ENCODE measurements at regions of chr12 and their contacts with region 1.

Region 1: GRCh38 chr12:49232940-49233841 is 31.7 kb upstream of the TUBA1C start:
- DNase-seq: no peak
- H3K4me3 Mint-ChIP-seq: peak overlapping the region; percentile 16
- H3K27ac Mint-ChIP-seq: peak overlapping the region; percentile 45
- H3K4me1 Mint-ChIP-seq: peaks cover 25% of the 10 kb centered on the region
- H3K27me3 Mint-ChIP-seq: peaks cover 3% of the 10 kb centered on the region

Region 2: DNA sequence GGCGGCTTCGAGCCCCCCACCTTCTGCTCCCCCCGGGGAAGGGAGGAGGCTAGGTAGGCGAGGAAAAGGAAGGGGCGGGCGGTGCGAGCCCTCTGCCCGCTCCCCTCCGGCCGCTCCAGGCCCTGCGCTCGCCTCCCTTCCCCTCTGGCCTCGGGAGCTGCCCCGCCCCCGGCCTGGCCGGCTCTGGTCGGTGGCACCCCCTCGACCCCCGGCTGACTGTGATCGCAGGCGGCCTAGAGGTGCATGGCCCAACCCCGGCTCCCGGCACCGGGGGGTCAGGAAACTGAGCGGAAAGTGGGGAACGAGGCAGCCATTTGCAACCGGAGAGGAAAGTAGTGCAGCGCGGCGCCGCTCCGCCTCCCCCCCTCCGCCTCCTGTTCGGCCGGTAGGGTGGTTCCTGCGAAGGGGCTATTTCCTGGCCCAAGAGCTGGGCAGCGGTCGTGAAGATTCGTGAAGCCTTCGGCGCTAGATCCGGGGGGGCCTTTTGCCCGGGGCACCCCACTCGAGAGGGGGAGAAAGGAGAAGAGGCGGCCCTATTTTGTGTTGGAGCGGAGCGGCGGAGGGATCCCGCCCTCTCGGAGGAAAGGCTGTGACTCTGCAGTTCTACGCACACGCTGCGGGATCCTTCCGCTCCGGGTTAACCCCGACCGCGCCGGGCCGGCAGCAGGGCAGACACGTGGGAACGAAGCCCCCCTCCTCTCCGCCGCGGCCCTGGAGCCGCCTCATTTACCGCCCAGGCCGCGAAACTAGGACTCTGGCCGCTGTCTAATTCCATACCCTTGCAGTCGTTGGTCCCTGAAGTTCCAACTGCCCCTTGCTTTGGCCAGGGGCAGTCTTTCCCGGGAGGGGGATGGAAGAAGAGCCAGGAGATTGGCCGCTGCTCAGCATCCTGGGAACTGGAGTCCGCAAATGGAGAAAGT is 172.7 kb before region 1 on chr12 and contains the start of gene KMT2D:
- CTCF ChIA-PET with region 1: interaction called, 12 read pairs
- POLR2A ChIA-PET with region 1: interaction called, 3 read pairs
- DNase-seq: peak; percentile 88
- H3K4me3 Mint-ChIP-seq: peak within 1 kb of the TSS; percentile 95
- H3K27ac Mint-ChIP-seq: peak within 1 kb of the TSS; percentile 91
- H3K4me1 Mint-ChIP-seq: peaks cover 50% of the 10 kb centered on the region
- H3K27me3 Mint-ChIP-seq: no peaks in the 10 kb centered on the region
- total RNA-seq, gene KMT2D: 82.3 to 87.8 TPM

Region 3: DNA sequence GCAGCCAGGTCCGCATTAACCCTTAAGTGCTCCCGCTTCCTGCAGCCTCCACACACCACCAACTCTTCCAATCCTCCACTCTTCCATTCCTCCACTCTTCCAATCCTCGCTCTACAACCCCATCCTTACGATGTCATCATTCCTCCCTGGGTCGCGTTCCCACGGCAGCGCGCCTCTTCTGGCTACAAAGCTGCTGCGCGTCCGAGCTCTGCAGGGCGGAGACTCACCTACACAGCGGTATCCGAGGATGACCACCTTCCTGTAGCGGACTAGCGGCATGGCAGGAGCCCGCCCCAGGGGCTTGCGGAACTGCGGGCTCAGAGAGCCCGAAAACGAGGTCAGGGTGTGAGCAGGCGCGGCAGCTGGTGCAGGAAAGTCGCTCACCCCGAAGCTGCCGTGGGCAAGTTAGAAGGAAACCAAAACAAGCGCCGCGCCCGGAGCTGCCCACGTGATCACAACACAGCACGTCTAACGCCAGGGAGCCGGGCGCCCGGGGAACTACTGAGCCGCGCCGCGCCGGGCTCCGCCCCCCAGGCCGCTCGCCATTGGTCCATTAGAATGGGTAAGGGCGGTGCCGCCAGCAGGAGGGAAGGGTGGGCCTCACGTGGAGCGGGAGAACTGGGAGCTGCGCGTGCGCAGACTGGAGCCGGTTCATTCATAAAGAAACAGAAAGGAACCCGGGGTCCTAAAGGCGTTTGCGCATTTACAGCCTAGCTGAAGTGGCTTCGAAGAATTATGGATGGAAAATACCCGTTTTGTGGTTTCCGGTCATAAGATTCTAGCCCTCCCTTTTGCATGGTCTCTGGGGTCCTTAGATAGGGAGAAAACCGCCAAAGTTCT is 163.5 kb before region 1 on chr12 and contains the start of gene RHEBL1:
- CTCF ChIA-PET with region 1: interaction called, 11 read pairs
- POLR2A ChIA-PET with region 1: no interaction called
- DNase-seq: peak; percentile 100
- H3K4me3 Mint-ChIP-seq: peak within 1 kb of the TSS; percentile 97
- H3K27ac Mint-ChIP-seq: peak within 1 kb of the TSS; percentile 86
- H3K4me1 Mint-ChIP-seq: peaks cover 33% of the 10 kb centered on the region
- H3K27me3 Mint-ChIP-seq: no peaks in the 10 kb centered on the region
- total RNA-seq, gene RHEBL1: 14.8 to 15.8 TPM

Region 4: GRCh38 chr12:49170924-49171323 is 62.3 kb before region 1 on chr12:
- CTCF ChIA-PET with region 1: no interaction called
- POLR2A ChIA-PET with region 1: no interaction called
- DNase-seq: no peak
- H3K4me3 Mint-ChIP-seq: no peak overlapping the region
- H3K27ac Mint-ChIP-seq: no peak overlapping the region
- H3K4me1 Mint-ChIP-seq: no peaks in the 10 kb centered on the region
- H3K27me3 Mint-ChIP-seq: peaks cover 3% of the 10 kb centered on the region

Measured in activated CD4-positive, alpha-beta memory T cell treated with anti-CD3 and anti-CD28 coated beads, Interleukin-2, amount 10 ng/mL, durations not matched to agents 7 days and 5 days (primary cell).